ENCODE measurements at regions of chr2 and their contacts with region 1.

Region 1: GRCh38 chr2:85266146-85267041 is 61.4 kb downstream of the TGOLN2 start:
- DNase-seq: peak; percentile 43
- H3K4me3 Mint-ChIP-seq: no peak overlapping the region
- H3K27ac Mint-ChIP-seq: no peak overlapping the region
- H3K4me1 Mint-ChIP-seq: no peaks in the 10 kb centered on the region
- H3K27me3 Mint-ChIP-seq: peaks cover 26% of the 10 kb centered on the region

Region 2: GRCh38 chr2:85071096-85071495 is 195.3 kb before region 1 on chr2:
- intact Hi-C with region 1: no loop called
- DNase-seq: no peak
- H3K4me3 Mint-ChIP-seq: no peak overlapping the region
- H3K27ac Mint-ChIP-seq: no peak overlapping the region
- H3K4me1 Mint-ChIP-seq: peaks cover 2% of the 10 kb centered on the region
- H3K27me3 Mint-ChIP-seq: peaks cover 22% of the 10 kb centered on the region

Region 3: DNA sequence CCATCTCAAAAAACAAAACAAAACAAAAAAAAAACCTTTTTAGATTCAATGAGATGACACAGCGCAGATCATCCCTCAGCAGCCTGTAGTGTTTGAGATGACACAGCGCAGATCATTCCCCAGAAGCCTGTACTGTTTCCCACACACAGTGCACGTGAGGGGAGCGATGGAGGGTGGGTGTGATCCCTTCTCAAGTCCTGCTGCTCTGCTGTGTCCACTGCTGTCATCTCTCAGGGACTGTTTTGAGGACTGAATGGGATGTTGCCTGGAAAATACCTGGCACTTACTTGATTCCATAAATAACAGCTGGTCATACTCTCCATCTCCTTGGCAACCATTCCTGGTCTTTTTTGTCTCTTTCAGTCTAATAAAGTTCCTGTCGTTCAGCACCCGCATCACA is 35.7 kb after region 1 on chr2:
- intact Hi-C with region 1: loop called (anchors 1 kb)
- DNase-seq: no peak
- H3K4me3 Mint-ChIP-seq: no peak overlapping the region
- H3K27ac Mint-ChIP-seq: no peak overlapping the region
- H3K4me1 Mint-ChIP-seq: peaks cover 5% of the 10 kb centered on the region
- H3K27me3 Mint-ChIP-seq: peaks cover 7% of the 10 kb centered on the region